ENCODE measurements at regions of chr10 and their contacts with region 1.

Region 1: GRCh38 chr10:114779803-114780609 is 41.6 kb upstream of the FHIP2A start:
- DNase-seq: peak; percentile 93
- H3K4me3 ChIP-seq: no peak overlapping the region
- CTCF ChIP-seq: no peak

Region 2: DNA sequence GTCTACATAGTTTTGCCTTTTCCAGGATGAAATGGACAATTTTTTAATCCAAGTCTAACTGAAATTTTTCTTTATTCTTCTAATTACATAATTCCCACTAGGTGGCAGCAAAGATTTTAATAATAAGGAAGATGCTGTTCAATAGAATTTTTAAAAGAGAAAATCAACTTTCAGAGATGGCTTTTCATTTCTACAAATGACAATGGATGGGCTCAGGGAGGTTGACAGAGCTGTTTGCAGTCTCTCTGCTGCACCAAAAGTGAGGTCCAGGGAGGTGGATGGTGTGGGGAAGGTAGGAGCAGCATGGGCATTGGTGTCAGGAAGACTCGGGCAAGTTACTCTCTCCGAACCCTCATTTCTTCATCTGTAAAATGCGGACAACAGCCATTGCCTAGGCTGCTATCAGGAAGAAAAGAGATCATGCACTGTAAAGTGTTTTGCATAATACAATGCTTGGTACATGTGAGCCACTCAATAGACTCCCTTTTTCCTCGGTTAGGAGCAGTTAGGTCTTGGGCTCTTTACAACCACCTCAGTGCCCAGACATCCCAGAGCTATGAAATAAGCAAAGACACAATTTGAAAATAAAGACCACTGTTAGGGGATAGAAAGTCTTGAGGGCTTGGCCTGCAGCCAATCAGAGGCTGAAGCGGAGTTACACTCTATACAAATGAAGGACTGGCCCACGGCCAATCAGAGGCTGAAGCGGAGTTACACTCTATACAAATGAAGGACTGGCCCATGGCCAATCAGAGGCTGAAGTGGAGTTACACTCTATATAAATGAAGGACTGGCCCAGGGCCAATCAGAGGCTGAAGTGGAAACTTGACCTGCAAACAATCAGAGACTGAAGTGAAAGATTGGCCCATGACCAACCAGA is 229.0 kb before region 1 on chr10:
- in situ Hi-C with region 1: loop called (anchors 25 kb)
- DNase-seq: no peak
- H3K4me3 ChIP-seq: peak overlapping the region; percentile 20
- CTCF ChIP-seq: no peak

Region 3: GRCh38 chr10:114749014-114749413 is 31.0 kb before region 1 on chr10:
- in situ Hi-C with region 1: no loop called
- DNase-seq: no peak
- H3K4me3 ChIP-seq: no peak overlapping the region
- CTCF ChIP-seq: no peak

Region 4: DNA sequence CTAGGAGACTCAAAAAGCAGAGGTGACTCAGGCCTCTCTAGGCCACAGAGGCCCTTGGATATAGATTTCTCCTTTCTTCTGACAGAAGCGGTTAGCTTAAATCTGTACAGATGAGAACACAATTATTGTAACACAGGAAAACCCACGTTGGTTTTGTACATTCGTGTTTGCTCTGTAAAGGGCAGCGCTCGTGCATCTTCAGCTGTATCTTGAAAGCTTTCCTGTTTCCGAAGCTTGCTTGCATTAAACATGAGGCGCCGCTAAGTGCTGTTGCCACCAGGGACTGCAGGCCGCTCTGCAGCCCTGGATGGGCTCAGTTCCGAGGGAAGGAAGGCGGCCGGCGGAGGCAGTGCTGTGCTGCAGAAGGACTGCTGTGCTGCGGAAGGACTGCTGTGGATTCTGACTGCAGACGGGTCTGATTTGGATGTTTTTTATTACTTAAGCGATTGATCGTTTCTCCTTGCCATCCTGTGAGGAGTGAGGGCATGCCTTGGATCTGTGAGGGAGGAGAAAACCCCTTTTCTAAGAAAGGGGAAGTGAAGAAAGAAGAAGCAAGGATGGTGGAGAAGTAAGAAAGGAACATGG is 94.9 kb after region 1 on chr10:
- in situ Hi-C with region 1: no loop called
- DNase-seq: no peak
- H3K4me3 ChIP-seq: no peak overlapping the region
- CTCF ChIP-seq: peak; percentile 46